ENCODE measurements at regions of chr20 and their contacts with region 1.

Region 1: DNA sequence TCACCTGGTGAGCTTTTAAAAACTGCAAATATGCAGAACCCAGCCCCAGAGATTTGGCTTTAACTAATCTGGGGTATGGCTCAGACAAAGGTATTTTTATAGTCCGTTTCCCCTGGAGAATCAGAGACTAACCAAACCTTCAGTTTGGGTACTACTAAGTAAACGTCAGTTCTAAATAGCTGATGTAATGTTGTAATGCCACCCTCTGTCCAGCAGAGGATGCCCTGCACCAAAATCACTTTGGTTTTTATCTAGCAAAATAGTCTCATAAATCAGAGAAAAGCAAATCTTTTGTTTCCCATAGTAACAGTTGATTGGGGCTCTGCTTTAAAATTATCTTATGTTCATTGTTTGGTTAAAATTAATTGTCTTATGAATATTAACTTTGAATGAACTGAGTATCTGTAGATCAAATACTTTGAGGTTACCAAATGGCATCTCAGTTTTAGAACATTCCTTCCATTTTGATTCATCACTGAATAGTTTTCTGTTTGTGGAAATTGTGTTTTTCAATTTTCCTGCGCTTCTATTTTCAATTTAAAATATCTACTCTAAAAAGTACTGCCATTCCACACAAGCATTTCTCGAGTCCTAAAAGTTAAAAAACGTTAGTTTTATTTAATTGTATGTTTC is 278.3 kb upstream of the PLCB4 start:
- DNase-seq: peak; percentile 60
- ATAC-seq: peak; percentile 90
- H3K4me3 ChIP-seq: no peak overlapping the region
- H3K27ac ChIP-seq: no peak overlapping the region
- H3K4me1 ChIP-seq: no peaks in the 10 kb centered on the region
- H3K27me3 ChIP-seq: no peaks in the 10 kb centered on the region
- CTCF ChIP-seq: peak; percentile 95
- POLR2A ChIP-seq: no peak
- RAD21 ChIP-seq: peak; percentile 90

Region 2: DNA sequence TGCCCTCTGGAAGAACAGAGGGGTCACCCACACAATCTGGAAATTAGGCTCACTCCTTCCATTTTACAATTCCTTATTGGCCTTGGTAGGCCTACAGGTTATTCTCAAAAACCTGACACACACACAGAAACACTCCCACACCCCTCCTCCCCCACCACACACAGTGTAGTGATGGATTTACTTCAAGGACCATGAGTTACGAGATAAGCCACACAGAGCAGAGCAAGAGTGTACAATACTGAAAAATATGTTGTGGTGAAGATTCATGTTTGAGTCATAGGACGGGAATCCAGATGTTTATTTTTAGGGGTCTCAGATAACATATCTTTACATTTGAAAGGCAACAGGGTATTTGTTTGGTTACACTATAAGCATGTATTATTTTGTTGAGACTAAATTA is 366.5 kb before region 1 on chr20:
- CTCF ChIA-PET with region 1: no interaction called
- POLR2A ChIA-PET with region 1: no interaction called
- dilution Hi-C with region 1: no loop called
- in situ Hi-C with region 1: no loop called
- intact Hi-C with region 1: no loop called
- DNase-seq: peak; percentile 86
- ATAC-seq: peak; percentile 98
- H3K4me3 ChIP-seq: no peak overlapping the region
- H3K27ac ChIP-seq: no peak overlapping the region
- H3K4me1 ChIP-seq: peaks cover 6% of the 10 kb centered on the region; the same call in 1 of the 2 replicates
- H3K27me3 ChIP-seq: no peaks in the 10 kb centered on the region
- CTCF ChIP-seq: no peak
- POLR2A ChIP-seq: no peak
- RAD21 ChIP-seq: no peak

Region 3: DNA sequence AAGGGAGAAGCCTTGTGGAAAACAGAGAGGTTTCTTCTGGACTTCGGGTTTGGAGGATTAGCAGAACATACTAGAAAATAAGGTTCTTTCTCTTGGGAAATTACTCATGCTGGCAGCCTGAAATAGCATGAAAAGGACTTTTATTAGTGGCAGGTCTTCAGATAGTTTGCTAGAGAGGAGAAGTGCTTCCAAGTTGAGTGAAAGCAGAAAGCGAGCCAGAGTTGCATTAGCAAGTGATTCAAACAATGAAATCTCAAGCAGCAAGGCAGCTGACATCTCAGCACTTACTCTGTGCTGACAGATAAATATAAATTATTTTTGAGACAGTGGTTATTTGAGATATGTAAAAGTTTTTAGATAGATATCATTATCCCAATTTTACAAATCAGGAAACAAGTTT is 370.2 kb after region 1 on chr20:
- CTCF ChIA-PET with region 1: no interaction called
- POLR2A ChIA-PET with region 1: no interaction called
- dilution Hi-C with region 1: no loop called
- in situ Hi-C with region 1: no loop called
- intact Hi-C with region 1: loop called (anchors 10 kb)
- DNase-seq: no peak
- ATAC-seq: no peak; the same call in 1 of the 2 replicates
- H3K4me3 ChIP-seq: no peak overlapping the region
- H3K27ac ChIP-seq: no peak overlapping the region
- H3K4me1 ChIP-seq: peaks cover 4% of the 10 kb centered on the region
- H3K27me3 ChIP-seq: no peaks in the 10 kb centered on the region
- CTCF ChIP-seq: no peak
- POLR2A ChIP-seq: no peak
- RAD21 ChIP-seq: no peak

Measured in IMR-90 (cell line).